ENCODE measurements at regions of chr14 and their contacts with region 1.

Region 1: DNA sequence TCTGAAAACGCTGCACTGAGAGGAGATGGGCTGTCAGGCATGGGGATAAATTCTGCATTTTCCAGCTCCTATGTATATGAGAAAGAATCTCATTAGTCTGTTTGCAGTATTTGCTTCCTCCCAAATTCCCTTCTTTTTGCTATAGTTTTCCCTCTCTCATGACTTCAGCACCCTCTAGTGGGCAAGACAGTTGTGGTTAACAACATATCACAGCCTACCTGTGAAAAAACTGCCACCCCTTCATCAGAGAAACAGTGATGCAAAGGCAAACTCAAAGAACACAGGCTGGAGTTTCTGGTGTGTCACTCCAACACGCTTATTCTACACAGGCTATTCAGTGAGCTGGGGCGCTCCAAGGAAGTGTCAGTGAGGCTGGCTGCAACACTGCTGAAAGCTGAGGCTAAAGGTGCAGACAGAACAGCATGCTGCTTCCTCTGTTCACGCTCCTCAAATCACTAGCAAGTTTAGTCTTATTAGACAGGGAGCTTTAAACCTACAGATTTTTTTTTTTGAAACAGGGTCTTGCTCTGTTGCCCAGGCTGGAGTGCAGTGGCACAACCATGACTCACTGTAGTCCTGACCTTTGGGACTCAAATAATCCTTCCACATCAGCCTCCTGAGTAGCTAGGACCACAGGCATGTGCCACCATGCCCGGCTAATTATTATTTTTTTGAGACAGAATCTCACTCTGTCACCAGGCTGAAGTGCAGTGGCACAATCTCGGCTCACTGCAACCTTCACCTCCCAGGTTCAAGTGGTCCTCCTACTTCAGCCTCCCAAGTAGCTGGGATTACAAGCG is 19.3 kb downstream of the ZC2HC1C start:
- DNase-seq: peak; percentile 54
- ATAC-seq: peak; percentile 64
- H3K4me3 Mint-ChIP-seq: no peak overlapping the region
- H3K27ac Mint-ChIP-seq: no peak overlapping the region
- H3K4me1 Mint-ChIP-seq: no peaks in the 10 kb centered on the region
- H3K27me3 Mint-ChIP-seq: no peaks in the 10 kb centered on the region

Region 2: GRCh38 chr14:74762917-74763802 is 325.6 kb before region 1 on chr14 and contains the start of gene YLPM1:
- CTCF ChIA-PET with region 1: no interaction called
- POLR2A ChIA-PET with region 1: no interaction called
- intact Hi-C with region 1: no loop called
- DNase-seq: peak; percentile 95
- ATAC-seq: peak; percentile 92
- H3K4me3 Mint-ChIP-seq: peak within 1 kb of the TSS; percentile 96
- H3K27ac Mint-ChIP-seq: peak within 1 kb of the TSS; percentile 97
- H3K4me1 Mint-ChIP-seq: peaks cover 42% of the 10 kb centered on the region
- H3K27me3 Mint-ChIP-seq: no peaks in the 10 kb centered on the region
- total RNA-seq, gene YLPM1: 53.0 to 60.9 TPM

Region 3: GRCh38 chr14:74913986-74914573 is 174.7 kb before region 1 on chr14:
- CTCF ChIA-PET with region 1: interaction called, 8 read pairs
- POLR2A ChIA-PET with region 1: no interaction called
- intact Hi-C with region 1: loop called in 1 of 2 experiments (anchors 1 kb)
- DNase-seq: peak; percentile 45
- ATAC-seq: peak; percentile 53
- H3K4me3 Mint-ChIP-seq: no peak overlapping the region
- H3K27ac Mint-ChIP-seq: no peak overlapping the region
- H3K4me1 Mint-ChIP-seq: no peaks in the 10 kb centered on the region
- H3K27me3 Mint-ChIP-seq: no peaks in the 10 kb centered on the region

Region 4: GRCh38 chr14:74945823-74946682 is 142.7 kb before region 1 on chr14:
- CTCF ChIA-PET with region 1: interaction called, 39 read pairs
- POLR2A ChIA-PET with region 1: no interaction called
- intact Hi-C with region 1: loop called (anchors 1 to 2 kb)
- DNase-seq: peak; percentile 87
- ATAC-seq: peak; percentile 69
- H3K4me3 Mint-ChIP-seq: no peak overlapping the region
- H3K27ac Mint-ChIP-seq: no peak overlapping the region
- H3K4me1 Mint-ChIP-seq: peaks cover 28% of the 10 kb centered on the region
- H3K27me3 Mint-ChIP-seq: no peaks in the 10 kb centered on the region

Region 5: GRCh38 chr14:75011356-75011994 is 77.3 kb before region 1 on chr14:
- CTCF ChIA-PET with region 1: no interaction called
- POLR2A ChIA-PET with region 1: no interaction called
- intact Hi-C with region 1: loop called in 1 of 2 experiments (anchors 5 kb)
- DNase-seq: peak; percentile 18
- ATAC-seq: peak; percentile 87
- H3K4me3 Mint-ChIP-seq: no peak overlapping the region
- H3K27ac Mint-ChIP-seq: peak overlapping the region; percentile 66
- H3K4me1 Mint-ChIP-seq: peaks cover 33% of the 10 kb centered on the region
- H3K27me3 Mint-ChIP-seq: no peaks in the 10 kb centered on the region

Region 6: DNA sequence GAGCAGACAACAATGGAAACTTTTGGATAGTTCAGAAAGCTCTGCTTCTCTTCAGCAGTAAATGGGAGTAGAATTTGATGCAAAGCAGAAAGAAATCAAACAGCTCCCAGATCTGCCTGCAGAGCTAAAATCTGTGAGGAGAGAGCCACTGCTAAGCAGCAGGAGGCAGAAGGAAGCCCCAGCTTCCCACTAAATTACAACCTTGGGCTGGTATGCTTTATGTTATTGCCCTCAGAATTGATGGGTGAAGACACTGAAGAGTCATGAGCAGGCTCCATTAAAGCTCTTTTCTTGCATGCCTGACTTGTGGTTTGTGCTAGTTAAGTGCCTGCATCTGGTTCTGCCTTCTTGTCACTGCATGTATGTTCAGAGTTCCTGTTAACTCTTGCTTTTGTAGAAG is 11.0 kb before region 1 on chr14:
- CTCF ChIA-PET with region 1: interaction called, 20 read pairs
- POLR2A ChIA-PET with region 1: no interaction called
- intact Hi-C with region 1: no loop called
- DNase-seq: peak; percentile 36
- ATAC-seq: peak; percentile 86
- H3K4me3 Mint-ChIP-seq: no peak overlapping the region
- H3K27ac Mint-ChIP-seq: peak overlapping the region; percentile 67
- H3K4me1 Mint-ChIP-seq: peaks cover 24% of the 10 kb centered on the region
- H3K27me3 Mint-ChIP-seq: no peaks in the 10 kb centered on the region

Region 7: DNA sequence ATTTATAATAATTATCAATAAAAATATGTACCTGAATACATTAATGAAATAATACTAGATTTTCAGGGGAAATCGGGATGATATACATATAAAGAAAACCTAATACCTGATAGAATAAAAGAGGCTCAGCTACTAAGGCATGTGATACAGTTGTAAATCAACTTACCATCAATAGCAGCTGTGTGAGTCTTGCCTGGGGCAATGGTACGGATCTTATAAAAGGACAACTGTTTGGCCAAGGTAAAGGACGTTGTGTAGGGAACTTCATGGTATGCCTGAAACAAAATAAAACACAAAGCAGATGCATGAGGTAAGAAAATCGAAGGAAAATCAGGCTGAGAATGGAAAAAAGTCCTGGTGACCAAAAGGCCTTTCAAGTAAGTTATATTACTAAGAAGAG is 12.7 kb after region 1 on chr14:
- CTCF ChIA-PET with region 1: interaction called, 12 read pairs
- POLR2A ChIA-PET with region 1: no interaction called
- intact Hi-C with region 1: no loop called
- DNase-seq: no peak
- ATAC-seq: no peak
- H3K4me3 Mint-ChIP-seq: no peak overlapping the region
- H3K27ac Mint-ChIP-seq: no peak overlapping the region
- H3K4me1 Mint-ChIP-seq: no peaks in the 10 kb centered on the region
- H3K27me3 Mint-ChIP-seq: no peaks in the 10 kb centered on the region

Measured in activated CD4-positive, alpha-beta T cell treated with anti-CD3 and anti-CD28 coated beads for 36 hours (primary cell).